Mammary epithelial cell (primary cell): ENCODE measurements at regions of chr14 and their contacts with region 1.

Region 1: GRCh38 chr14:56555921-56556570 is 23.6 kb upstream of the TMEM260 start:
- DNase-seq: peak; percentile 21
- H3K4me3 ChIP-seq: no peak overlapping the region
- H3K27ac ChIP-seq: no peak overlapping the region
- H3K4me1 ChIP-seq: no peaks in the 10 kb centered on the region
- H3K27me3 ChIP-seq: no peaks in the 10 kb centered on the region
- CTCF ChIP-seq: peak; percentile 51 to 82

Region 2: DNA sequence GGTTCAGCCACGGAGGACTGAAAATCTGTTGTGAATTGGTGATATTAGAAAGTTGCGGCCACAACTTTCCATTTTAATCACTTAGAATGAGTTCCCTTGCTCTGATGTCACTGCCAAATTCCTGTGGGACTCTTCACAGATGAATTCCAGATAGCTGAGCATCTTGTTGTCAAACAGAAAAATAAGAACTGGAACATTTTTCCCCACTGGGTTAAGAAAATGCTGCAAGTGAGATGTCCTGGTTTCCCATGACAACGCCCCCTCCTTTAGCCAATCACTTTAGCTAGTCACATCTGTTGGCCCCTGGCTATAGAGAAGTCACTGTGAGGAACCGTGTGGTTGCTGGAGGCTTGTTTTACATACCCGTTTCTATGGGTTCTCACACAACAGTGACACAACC is 840.2 kb before region 1 on chr14:
- CTCF ChIA-PET with region 1: no interaction called
- dilution Hi-C with region 1: no loop called
- in situ Hi-C with region 1: no loop called
- intact Hi-C with region 1: no loop called
- DNase-seq: peak; percentile 66
- H3K4me3 ChIP-seq: no peak overlapping the region
- H3K27ac ChIP-seq: no peak overlapping the region
- H3K4me1 ChIP-seq: no peaks in the 10 kb centered on the region
- H3K27me3 ChIP-seq: peaks cover 13% of the 10 kb centered on the region
- CTCF ChIP-seq: no peak

Region 3: DNA sequence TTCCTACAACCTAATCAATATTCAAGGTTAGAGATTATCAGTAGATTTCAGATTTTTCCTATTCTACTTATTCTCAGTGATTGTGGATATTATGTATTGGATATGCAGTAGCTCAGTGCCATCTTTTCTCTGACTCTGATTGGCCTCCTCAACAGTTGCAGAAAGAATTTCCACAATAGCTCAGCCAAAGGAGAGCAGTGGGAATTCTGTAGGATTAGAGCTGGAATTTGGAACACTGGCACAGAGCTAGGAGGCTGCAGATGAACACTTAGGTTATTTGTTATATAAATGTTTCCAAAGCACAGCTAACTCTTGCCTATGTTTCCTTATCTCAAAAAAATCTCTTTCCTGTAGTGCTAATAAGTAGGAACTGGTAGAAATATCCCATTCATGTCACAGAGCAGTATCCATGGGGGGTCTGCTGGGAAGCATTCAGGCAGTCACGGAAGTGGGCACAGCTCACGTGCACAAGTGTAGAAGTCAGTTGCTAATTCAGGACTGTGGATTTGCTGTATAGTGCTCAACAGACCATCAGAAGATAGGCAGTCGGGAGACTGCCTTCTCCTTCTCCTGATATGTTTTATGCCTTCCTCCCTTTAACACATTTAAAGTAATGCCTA is 92.7 kb before region 1 on chr14:
- CTCF ChIA-PET with region 1: no interaction called
- dilution Hi-C with region 1: no loop called
- in situ Hi-C with region 1: no loop called
- intact Hi-C with region 1: no loop called
- DNase-seq: no peak
- H3K4me3 ChIP-seq: no peak overlapping the region
- H3K27ac ChIP-seq: no peak overlapping the region
- H3K4me1 ChIP-seq: no peaks in the 10 kb centered on the region
- H3K27me3 ChIP-seq: no peaks in the 10 kb centered on the region
- CTCF ChIP-seq: no peak

Region 4: GRCh38 chr14:56514663-56515371 is 41.2 kb before region 1 on chr14:
- CTCF ChIA-PET with region 1: no interaction called
- dilution Hi-C with region 1: loop called (anchors 5 kb)
- in situ Hi-C with region 1: no loop called
- intact Hi-C with region 1: no loop called
- DNase-seq: no peak
- H3K4me3 ChIP-seq: no peak overlapping the region
- H3K27ac ChIP-seq: no peak overlapping the region
- H3K4me1 ChIP-seq: no peaks in the 10 kb centered on the region
- H3K27me3 ChIP-seq: peaks cover 4% of the 10 kb centered on the region
- CTCF ChIP-seq: no peak

Region 5: DNA sequence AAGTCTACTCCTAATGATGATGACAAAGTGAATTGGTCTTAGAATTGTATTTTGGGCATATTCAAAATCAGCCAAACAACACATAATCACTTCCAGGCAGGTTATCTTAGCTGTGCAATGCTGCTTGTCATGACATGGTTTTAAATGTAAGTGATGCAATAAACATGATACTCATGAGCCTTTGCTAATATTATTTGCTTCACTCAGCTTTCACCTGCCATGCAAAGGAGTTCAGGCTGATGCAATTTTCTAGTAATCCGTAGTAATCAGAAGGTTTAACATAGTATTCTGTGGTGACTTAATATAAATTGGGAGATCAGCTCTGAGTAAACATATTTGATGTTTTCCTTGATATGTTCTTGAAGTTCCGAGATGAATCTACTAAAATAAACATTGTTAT is 52.6 kb after region 1 on chr14:
- CTCF ChIA-PET with region 1: no interaction called
- dilution Hi-C with region 1: no loop called
- in situ Hi-C with region 1: no loop called
- intact Hi-C with region 1: no loop called
- DNase-seq: peak; percentile 10
- H3K4me3 ChIP-seq: no peak overlapping the region
- H3K27ac ChIP-seq: no peak overlapping the region
- H3K4me1 ChIP-seq: no peaks in the 10 kb centered on the region
- H3K27me3 ChIP-seq: no peaks in the 10 kb centered on the region
- CTCF ChIP-seq: no peak

Region 6: GRCh38 chr14:56874375-56874774 is 318.3 kb after region 1 on chr14:
- CTCF ChIA-PET with region 1: no interaction called
- dilution Hi-C with region 1: no loop called
- in situ Hi-C with region 1: no loop called
- intact Hi-C with region 1: loop called (anchors 1 kb)
- DNase-seq: peak; percentile 9
- H3K4me3 ChIP-seq: no peak overlapping the region
- H3K27ac ChIP-seq: no peak overlapping the region
- H3K4me1 ChIP-seq: no peaks in the 10 kb centered on the region
- H3K27me3 ChIP-seq: no peaks in the 10 kb centered on the region
- CTCF ChIP-seq: peak; percentile 23 to 46

Region 7: GRCh38 chr14:57182760-57183503 is 626.9 kb after region 1 on chr14:
- CTCF ChIA-PET with region 1: no interaction called
- dilution Hi-C with region 1: no loop called
- in situ Hi-C with region 1: no loop called
- intact Hi-C with region 1: loop called (anchors 2 kb)
- DNase-seq: peak; percentile 2
- H3K4me3 ChIP-seq: no peak overlapping the region
- H3K27ac ChIP-seq: no peak overlapping the region
- H3K4me1 ChIP-seq: no peaks in the 10 kb centered on the region
- H3K27me3 ChIP-seq: peaks cover 1% of the 10 kb centered on the region
- CTCF ChIP-seq: peak; percentile 41 to 51

Region 8: DNA sequence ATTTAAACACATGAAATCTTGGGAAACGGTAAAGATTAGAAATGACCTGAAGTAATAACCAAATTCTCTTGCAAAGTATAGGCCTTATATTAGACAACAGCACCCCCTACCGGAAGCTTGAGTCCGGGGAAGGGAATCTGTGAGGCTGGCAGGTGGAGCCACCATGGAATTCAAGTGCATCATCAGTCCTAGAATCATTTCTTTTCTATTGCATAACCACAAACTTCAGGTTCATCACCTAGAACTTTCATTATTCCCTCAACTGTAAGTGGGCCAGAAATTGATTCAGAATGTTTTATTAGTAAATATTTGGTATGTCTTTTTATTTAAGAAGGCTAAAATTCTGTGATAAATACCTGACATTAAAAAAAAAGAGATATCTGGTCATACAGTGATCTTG is 761.3 kb after region 1 on chr14:
- CTCF ChIA-PET with region 1: no interaction called
- dilution Hi-C with region 1: no loop called
- in situ Hi-C with region 1: no loop called
- intact Hi-C with region 1: loop called (anchors 1 kb)
- DNase-seq: peak; percentile 67
- H3K4me3 ChIP-seq: no peak overlapping the region
- H3K27ac ChIP-seq: no peak overlapping the region
- H3K4me1 ChIP-seq: no peaks in the 10 kb centered on the region
- H3K27me3 ChIP-seq: no peaks in the 10 kb centered on the region
- CTCF ChIP-seq: peak; percentile 83 to 88

Region 9: GRCh38 chr14:58072288-58073071 is 1516.4 kb after region 1 on chr14:
- CTCF ChIA-PET with region 1: no interaction called
- dilution Hi-C with region 1: no loop called
- in situ Hi-C with region 1: no loop called
- intact Hi-C with region 1: loop called (anchors 10 kb)
- DNase-seq: peak; percentile 44
- H3K4me3 ChIP-seq: no peak overlapping the region
- H3K27ac ChIP-seq: no peak overlapping the region
- H3K4me1 ChIP-seq: peaks cover 13% of the 10 kb centered on the region
- H3K27me3 ChIP-seq: no peaks in the 10 kb centered on the region
- CTCF ChIP-seq: peak; percentile 61 to 73